Activated CD8-positive, alpha-beta T cell treated with anti-CD3 and anti-CD28 coated beads, Interleukin-2, amount 10 ng/mL, durations not matched to agents 7 days and 5 days (primary cell): ENCODE measurements at regions of chr1 and their contacts with region 1.

Region 1: GRCh38 chr1:186985889-186986491 is 157.2 kb downstream of the PLA2G4A start:
- DNase-seq: no peak
- ATAC-seq: peak; percentile 53
- H3K4me3 Mint-ChIP-seq: no peak overlapping the region
- H3K27ac Mint-ChIP-seq: no peak overlapping the region
- H3K4me1 Mint-ChIP-seq: no peaks in the 10 kb centered on the region
- H3K27me3 Mint-ChIP-seq: peaks cover 6% of the 10 kb centered on the region

Region 2: DNA sequence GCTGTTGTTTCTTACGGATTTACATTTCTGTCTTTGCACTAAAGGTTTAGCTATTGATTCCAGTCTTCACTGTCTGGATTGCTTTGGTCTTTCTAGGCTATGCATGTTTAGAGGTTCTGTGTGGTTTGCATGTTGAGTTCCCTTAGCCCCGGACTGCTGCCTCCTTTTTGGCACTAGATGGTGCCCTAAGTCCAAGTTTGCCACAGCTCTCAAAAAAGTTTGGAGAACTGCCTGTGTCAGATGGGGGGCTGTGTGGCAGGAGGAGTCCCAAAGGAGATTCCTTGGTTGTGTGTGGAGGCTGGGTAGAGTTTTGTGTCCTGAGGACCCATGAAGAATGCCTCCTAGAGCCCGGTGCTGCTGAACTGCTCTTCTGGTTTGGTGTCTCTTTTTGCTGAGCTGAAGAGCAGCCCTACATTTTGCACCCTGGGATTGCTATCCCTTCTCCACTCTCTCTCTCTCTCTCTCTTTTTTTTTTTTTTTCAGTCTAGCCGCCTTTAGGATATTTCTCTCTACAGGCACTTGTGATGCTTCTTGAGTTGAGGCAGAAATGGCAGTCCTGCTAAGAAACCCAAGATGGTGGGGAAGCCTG is 380.1 kb before region 1 on chr1:
- CTCF ChIA-PET with region 1: interaction called, 29 read pairs
- POLR2A ChIA-PET with region 1: no interaction called
- DNase-seq: peak; percentile 51
- ATAC-seq: no peak
- H3K4me3 Mint-ChIP-seq: no peak overlapping the region
- H3K27ac Mint-ChIP-seq: no peak overlapping the region
- H3K4me1 Mint-ChIP-seq: no peaks in the 10 kb centered on the region
- H3K27me3 Mint-ChIP-seq: peaks cover 18% of the 10 kb centered on the region

Region 3: GRCh38 chr1:187168297-187168696 is 182.3 kb after region 1 on chr1:
- CTCF ChIA-PET with region 1: no interaction called
- POLR2A ChIA-PET with region 1: no interaction called
- DNase-seq: no peak
- ATAC-seq: no peak
- H3K4me3 Mint-ChIP-seq: no peak overlapping the region
- H3K27ac Mint-ChIP-seq: no peak overlapping the region
- H3K4me1 Mint-ChIP-seq: no peaks in the 10 kb centered on the region
- H3K27me3 Mint-ChIP-seq: no peaks in the 10 kb centered on the region

Region 4: DNA sequence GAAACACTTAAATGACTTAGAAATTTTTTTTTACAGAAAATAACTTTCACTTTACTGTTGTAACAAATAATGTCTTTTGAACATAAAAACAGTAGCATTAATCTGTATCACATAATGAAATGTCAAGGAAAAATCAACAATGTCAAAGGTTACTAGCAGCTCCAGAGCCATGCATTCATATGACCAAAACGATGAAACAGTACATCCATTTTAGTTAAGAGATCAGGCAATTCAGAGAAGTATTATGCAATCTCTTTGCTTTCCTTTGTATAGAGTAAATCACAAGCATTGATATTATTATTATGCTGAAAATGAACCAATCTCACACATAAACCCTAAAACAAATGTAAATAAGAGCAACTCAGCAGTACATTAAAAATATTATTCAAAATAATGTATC is 591.6 kb after region 1 on chr1:
- CTCF ChIA-PET with region 1: no interaction called
- POLR2A ChIA-PET with region 1: no interaction called
- DNase-seq: no peak
- ATAC-seq: no peak
- H3K4me3 Mint-ChIP-seq: no peak overlapping the region
- H3K27ac Mint-ChIP-seq: no peak overlapping the region
- H3K4me1 Mint-ChIP-seq: no peaks in the 10 kb centered on the region
- H3K27me3 Mint-ChIP-seq: no peaks in the 10 kb centered on the region